GM12878 (cell line): ENCODE measurements at regions of chr4 and their contacts with region 1.

Region 1: GRCh38 chr4:10013722-10014121 is 7.6 kb downstream of the SLC2A9 start:
- DNase-seq: no peak
- ATAC-seq: peak; percentile 86
- H3K4me3 ChIP-seq: no peak overlapping the region
- H3K27ac ChIP-seq: no peak overlapping the region
- H3K4me1 ChIP-seq: peaks cover 8% of the 10 kb centered on the region; the same call in 1 of the 2 replicates
- H3K27me3 ChIP-seq: no peaks in the 10 kb centered on the region
- CTCF ChIP-seq: peak; percentile 72 to 78 (median 76)
- EP300 ChIP-seq: no peak
- POLR2A ChIP-seq: no peak
- RAD21 ChIP-seq: peak; percentile 80

Region 2: GRCh38 chr4:9771034-9771433 is 242.7 kb before region 1 on chr4:
- CTCF ChIA-PET with region 1: interaction called, 325 read pairs
- POLR2A ChIA-PET with region 1: interaction called, 3 read pairs
- RAD21 ChIA-PET with region 1: interaction called, 185 read pairs
- SMC1A ChIA-PET with region 1: interaction called, 159 read pairs
- in situ Hi-C with region 1: no loop called
- intact Hi-C with region 1: no loop called
- DNase-seq: no peak
- ATAC-seq: no peak
- H3K4me3 ChIP-seq: no peak overlapping the region
- H3K27ac ChIP-seq: no peak overlapping the region
- H3K4me1 ChIP-seq: no peaks in the 10 kb centered on the region
- H3K27me3 ChIP-seq: no peaks in the 10 kb centered on the region; a peak in 1 of 4 replicates
- CTCF ChIP-seq: no peak
- EP300 ChIP-seq: no peak
- POLR2A ChIP-seq: no peak
- RAD21 ChIP-seq: no peak

Region 3: DNA sequence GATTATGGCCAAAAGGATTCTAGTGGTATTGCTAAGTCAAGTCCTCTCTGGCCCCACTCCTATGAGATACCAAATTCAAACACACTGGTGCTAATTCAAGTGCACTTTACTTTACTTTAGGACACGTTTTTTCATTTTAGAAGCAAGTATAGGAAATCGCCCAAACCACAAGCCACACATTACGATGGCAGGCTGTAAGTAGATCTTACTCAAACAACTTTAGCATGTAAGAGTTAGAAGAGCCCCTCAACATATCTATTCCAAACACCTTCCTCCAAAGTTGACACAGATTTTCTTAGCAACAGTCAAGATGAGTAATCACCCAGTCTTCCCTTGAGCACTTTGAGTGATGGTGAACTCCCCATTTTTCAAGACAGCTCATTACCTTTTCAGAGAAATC is 188.7 kb before region 1 on chr4:
- CTCF ChIA-PET with region 1: interaction called, 4 read pairs
- POLR2A ChIA-PET with region 1: no interaction called
- RAD21 ChIA-PET with region 1: interaction called, 6 read pairs
- SMC1A ChIA-PET with region 1: interaction called, 11 read pairs
- in situ Hi-C with region 1: no loop called
- intact Hi-C with region 1: no loop called
- DNase-seq: no peak
- ATAC-seq: peak; percentile 86
- H3K4me3 ChIP-seq: no peak overlapping the region
- H3K27ac ChIP-seq: no peak overlapping the region
- H3K4me1 ChIP-seq: no peaks in the 10 kb centered on the region
- H3K27me3 ChIP-seq: no peaks in the 10 kb centered on the region; a peak in 1 of 4 replicates
- CTCF ChIP-seq: no peak
- EP300 ChIP-seq: no peak
- POLR2A ChIP-seq: no peak
- RAD21 ChIP-seq: no peak

Region 4: DNA sequence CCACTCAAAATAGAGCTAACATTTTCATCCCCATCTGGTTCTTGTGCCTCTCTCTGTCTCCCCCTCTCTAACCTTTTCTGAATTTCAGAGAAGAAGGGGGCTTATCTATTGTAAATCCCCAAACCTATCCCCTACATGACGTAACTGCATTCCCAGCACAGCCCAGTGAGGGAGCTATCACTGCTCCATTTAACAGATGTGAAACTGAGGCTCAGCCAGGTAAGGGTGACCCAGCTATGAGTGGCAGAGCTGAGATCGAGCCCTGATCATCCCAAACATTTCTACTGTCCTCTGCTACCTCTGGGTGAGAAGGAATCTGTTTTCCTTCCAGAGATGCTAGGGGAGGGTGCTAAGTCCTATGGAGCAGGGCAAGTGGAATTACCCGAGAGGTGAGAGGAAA is 99.9 kb before region 1 on chr4:
- CTCF ChIA-PET with region 1: interaction called, 37 read pairs
- POLR2A ChIA-PET with region 1: interaction called, 3 read pairs
- RAD21 ChIA-PET with region 1: interaction called, 22 read pairs
- SMC1A ChIA-PET with region 1: interaction called, 18 read pairs
- in situ Hi-C with region 1: no loop called
- intact Hi-C with region 1: loop called (anchors 5 kb)
- DNase-seq: no peak
- ATAC-seq: no peak
- H3K4me3 ChIP-seq: no peak overlapping the region
- H3K27ac ChIP-seq: no peak overlapping the region
- H3K4me1 ChIP-seq: no peaks in the 10 kb centered on the region
- H3K27me3 ChIP-seq: no peaks in the 10 kb centered on the region
- CTCF ChIP-seq: no peak
- EP300 ChIP-seq: no peak
- POLR2A ChIP-seq: no peak
- RAD21 ChIP-seq: no peak

Region 5: DNA sequence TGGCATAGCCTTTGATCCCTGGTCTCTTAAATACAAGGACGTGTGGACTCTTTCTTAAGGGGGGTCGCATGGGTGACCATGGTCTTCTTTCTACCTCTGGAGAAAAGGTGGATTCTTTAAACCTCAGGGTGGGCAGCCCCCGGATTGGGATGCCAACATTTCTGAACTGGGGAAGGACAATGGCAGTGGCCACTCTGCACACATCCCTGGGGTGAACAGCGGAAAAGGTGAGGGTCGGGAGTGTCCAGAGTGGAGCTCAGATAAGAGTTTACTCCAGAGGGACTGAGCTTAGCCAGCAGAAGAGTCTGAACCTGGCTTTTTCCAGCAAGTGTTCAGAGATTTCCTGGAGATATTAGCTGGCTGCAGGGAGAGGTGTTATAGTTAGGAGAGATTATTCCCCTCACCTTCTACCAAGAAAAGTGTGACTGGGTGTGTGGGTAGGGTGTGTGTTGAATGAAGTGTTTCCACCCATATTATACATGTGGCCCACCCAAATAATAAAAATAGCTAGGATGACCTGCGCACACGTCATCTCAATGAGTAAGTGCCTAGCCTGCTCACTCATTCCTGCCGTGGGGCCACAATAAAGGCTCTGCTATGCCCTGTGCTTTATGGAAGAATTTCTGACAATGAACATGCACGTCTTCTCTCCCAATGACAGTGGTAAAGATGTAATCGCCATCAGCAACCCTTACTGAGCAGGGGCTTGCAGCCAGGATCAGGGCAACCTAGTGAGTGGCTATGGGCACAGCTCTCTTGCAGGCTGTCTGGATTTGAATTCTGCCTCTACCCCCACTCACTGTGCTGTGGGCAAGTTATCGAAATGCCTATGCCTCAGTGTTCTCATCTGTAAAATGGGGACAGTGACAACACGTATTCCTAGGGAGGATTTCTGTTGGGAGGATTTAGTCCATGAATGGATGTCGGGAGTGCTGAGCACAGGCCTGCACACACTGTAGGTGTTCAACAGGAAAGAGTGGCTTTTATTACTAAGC is 69.0 kb before region 1 on chr4:
- CTCF ChIA-PET with region 1: interaction called, 57 read pairs
- POLR2A ChIA-PET with region 1: no interaction called
- RAD21 ChIA-PET with region 1: interaction called, 28 read pairs
- SMC1A ChIA-PET with region 1: interaction called, 12 read pairs
- in situ Hi-C with region 1: no loop called
- intact Hi-C with region 1: no loop called
- DNase-seq: no peak
- ATAC-seq: no peak
- H3K4me3 ChIP-seq: no peak overlapping the region
- H3K27ac ChIP-seq: no peak overlapping the region
- H3K4me1 ChIP-seq: no peaks in the 10 kb centered on the region
- H3K27me3 ChIP-seq: no peaks in the 10 kb centered on the region
- CTCF ChIP-seq: no peak
- EP300 ChIP-seq: no peak
- POLR2A ChIP-seq: no peak
- RAD21 ChIP-seq: no peak

Region 6: GRCh38 chr4:9987749-9988362 is 25.9 kb before region 1 on chr4:
- CTCF ChIA-PET with region 1: interaction called, 49 read pairs
- POLR2A ChIA-PET with region 1: interaction called, 15 read pairs
- RAD21 ChIA-PET with region 1: interaction called, 41 read pairs
- SMC1A ChIA-PET with region 1: interaction called, 43 read pairs
- in situ Hi-C with region 1: no loop called
- intact Hi-C with region 1: no loop called
- DNase-seq: no peak
- ATAC-seq: peak; percentile 80
- H3K4me3 ChIP-seq: peak overlapping the region; percentile 5; the same call in 1 of the 2 replicates
- H3K27ac ChIP-seq: peak overlapping the region; percentile 42
- H3K4me1 ChIP-seq: peaks cover 10% of the 10 kb centered on the region
- H3K27me3 ChIP-seq: no peaks in the 10 kb centered on the region
- CTCF ChIP-seq: no peak
- EP300 ChIP-seq: no peak
- POLR2A ChIP-seq: no peak
- RAD21 ChIP-seq: no peak

Region 7: DNA sequence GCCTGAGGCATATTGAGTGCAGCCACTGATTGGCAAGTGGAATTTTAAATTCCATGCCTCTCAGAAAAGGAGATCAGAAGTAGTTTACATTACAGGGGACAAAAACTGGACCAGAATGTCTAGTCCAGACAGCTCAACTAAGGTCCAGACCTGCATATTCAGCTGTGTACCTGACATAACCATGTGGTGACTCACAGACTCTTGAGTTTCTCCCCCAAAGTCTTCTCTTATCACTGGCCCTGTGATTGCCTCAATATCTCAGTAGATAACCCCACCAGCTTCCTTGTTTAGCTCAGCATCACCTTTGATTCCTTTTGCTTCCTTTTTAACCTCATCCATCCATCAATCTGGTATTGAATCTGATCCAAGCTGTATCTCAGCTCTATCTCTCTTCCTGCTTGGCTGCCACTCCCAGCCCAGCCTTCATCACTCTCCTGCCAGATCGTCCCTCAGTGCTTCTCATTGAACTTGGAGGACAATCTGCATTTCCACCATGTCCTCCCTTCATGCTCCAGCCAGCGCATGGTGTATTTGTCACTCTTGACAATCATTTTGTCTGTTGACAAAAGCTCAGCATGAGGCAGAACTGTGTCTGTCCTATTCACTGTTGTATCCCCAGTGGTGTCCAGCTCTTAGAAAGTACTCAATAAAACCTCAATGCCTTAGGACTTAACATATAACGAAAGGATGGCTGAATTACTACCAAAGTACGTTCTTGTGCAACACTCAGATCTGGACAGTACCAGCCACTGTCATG is 35.4 kb after region 1 on chr4:
- CTCF ChIA-PET with region 1: no interaction called
- POLR2A ChIA-PET with region 1: no interaction called
- RAD21 ChIA-PET with region 1: no interaction called
- SMC1A ChIA-PET with region 1: no interaction called
- in situ Hi-C with region 1: no loop called
- intact Hi-C with region 1: no loop called
- DNase-seq: no peak
- ATAC-seq: no peak
- H3K4me3 ChIP-seq: no peak overlapping the region
- H3K27ac ChIP-seq: no peak overlapping the region
- H3K4me1 ChIP-seq: no peaks in the 10 kb centered on the region
- H3K27me3 ChIP-seq: no peaks in the 10 kb centered on the region
- CTCF ChIP-seq: no peak
- EP300 ChIP-seq: no peak
- POLR2A ChIP-seq: no peak
- RAD21 ChIP-seq: no peak

Region 8: GRCh38 chr4:10116580-10117358 is 103.0 kb after region 1 on chr4 and contains the start of gene WDR1:
- CTCF ChIA-PET with region 1: interaction called, 13 read pairs
- POLR2A ChIA-PET with region 1: interaction called, 4 read pairs
- RAD21 ChIA-PET with region 1: interaction called, 15 read pairs
- SMC1A ChIA-PET with region 1: interaction called, 8 read pairs
- in situ Hi-C with region 1: no loop called
- intact Hi-C with region 1: no loop called
- DNase-seq: peak; percentile 71
- ATAC-seq: peak; percentile 92
- H3K4me3 ChIP-seq: peak within 1 kb of the TSS; percentile 99
- H3K27ac ChIP-seq: peak within 1 kb of the TSS; percentile 92
- H3K4me1 ChIP-seq: peaks cover 17% of the 10 kb centered on the region
- H3K27me3 ChIP-seq: no peaks in the 10 kb centered on the region
- CTCF ChIP-seq: no peak
- EP300 ChIP-seq: no peak
- POLR2A ChIP-seq: peak; percentile 91
- RAD21 ChIP-seq: no peak
- polyA plus RNA-seq, gene WDR1: 28.5 to 57.1 TPM

Region 9: DNA sequence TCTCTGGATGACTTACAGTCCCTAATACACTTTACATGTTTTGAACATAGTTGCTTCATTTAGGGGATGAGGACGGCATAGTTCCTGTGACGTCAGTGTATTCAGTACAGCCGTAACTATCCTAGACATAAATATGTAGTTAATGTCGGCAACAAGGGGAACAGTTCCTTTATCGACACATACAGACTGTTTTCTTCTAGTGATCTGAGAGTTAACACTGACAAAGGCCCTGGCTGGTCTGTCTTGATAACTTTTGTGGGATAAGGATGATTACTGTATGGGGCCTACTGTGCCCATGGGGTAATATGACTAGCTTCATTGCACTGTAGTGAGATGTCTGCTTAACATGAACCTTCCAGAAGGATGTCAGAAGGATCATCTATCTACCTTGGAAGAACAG is 312.4 kb after region 1 on chr4:
- CTCF ChIA-PET with region 1: no interaction called
- POLR2A ChIA-PET with region 1: no interaction called
- RAD21 ChIA-PET with region 1: no interaction called
- SMC1A ChIA-PET with region 1: no interaction called
- in situ Hi-C with region 1: no loop called
- intact Hi-C with region 1: no loop called
- DNase-seq: no peak
- ATAC-seq: no peak
- H3K4me3 ChIP-seq: no peak overlapping the region
- H3K27ac ChIP-seq: no peak overlapping the region
- H3K4me1 ChIP-seq: no peaks in the 10 kb centered on the region
- H3K27me3 ChIP-seq: peaks cover 0 to 3% of the 10 kb centered on the region in 2 experiments; a peak in 1 of 4 replicates
- CTCF ChIP-seq: no peak
- EP300 ChIP-seq: no peak
- POLR2A ChIP-seq: no peak
- RAD21 ChIP-seq: no peak

Region 10: GRCh38 chr4:10346023-10346422 is 332.3 kb after region 1 on chr4:
- CTCF ChIA-PET with region 1: no interaction called
- POLR2A ChIA-PET with region 1: no interaction called
- RAD21 ChIA-PET with region 1: no interaction called
- SMC1A ChIA-PET with region 1: no interaction called
- in situ Hi-C with region 1: no loop called
- intact Hi-C with region 1: no loop called
- DNase-seq: no peak
- ATAC-seq: no peak
- H3K4me3 ChIP-seq: no peak overlapping the region
- H3K27ac ChIP-seq: no peak overlapping the region
- H3K4me1 ChIP-seq: no peaks in the 10 kb centered on the region
- H3K27me3 ChIP-seq: no peaks in the 10 kb centered on the region
- CTCF ChIP-seq: no peak
- EP300 ChIP-seq: no peak
- POLR2A ChIP-seq: no peak
- RAD21 ChIP-seq: no peak